Activated B cell treated with CpG ODN at 0.5 μM for 24 hours (primary cell): ENCODE measurements at regions of chr11 and their contacts with region 1.

Region 1: DNA sequence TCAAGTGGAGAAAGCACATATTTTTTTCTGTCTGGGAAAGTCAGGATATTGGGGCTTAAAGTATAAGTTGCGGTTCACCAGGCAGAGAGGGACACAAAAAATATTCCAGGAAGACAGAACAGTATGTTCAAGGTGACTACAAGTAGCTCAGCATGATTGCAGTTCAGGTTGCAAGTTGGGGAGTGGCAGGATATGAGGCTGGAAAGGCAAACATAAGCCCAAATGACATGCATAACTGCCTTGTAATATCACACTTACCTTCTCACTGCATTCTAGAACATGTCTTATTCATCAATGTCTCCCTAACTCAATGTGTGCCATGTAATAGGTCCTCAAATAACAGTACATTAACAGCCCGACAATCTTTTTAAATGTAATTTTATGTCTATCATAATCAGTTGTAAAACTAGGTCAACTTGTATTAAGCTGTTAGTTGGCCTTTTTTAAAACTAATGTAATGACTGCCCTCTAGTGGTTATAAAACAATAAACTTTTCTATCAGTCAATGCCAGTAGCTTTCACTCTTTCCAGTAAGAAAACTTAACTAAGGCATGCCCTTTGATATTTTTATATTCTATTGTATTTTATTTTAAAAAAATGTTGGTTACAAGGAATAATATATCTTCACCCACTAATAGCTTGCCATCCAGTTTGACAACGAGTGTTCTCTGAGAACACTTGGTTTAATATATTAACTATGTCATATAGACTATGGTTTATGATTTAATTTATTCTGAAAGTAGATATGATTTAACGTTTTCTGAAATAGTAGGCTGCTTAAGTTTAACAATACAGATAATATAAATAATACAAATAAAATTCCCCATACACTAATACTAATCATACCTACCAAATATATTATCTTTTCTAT is 39.4 kb upstream of the CFAP300 start:
- DNase-seq: no peak
- ATAC-seq: no peak
- H3K4me3 Mint-ChIP-seq: no peak overlapping the region
- H3K27ac Mint-ChIP-seq: no peak overlapping the region
- H3K4me1 Mint-ChIP-seq: no peaks in the 10 kb centered on the region
- H3K27me3 Mint-ChIP-seq: peaks cover 11% of the 10 kb centered on the region
- CTCF ChIP-seq: peak; percentile 81

Region 2: GRCh38 chr11:101390539-101390938 is 617.3 kb before region 1 on chr11:
- CTCF ChIA-PET with region 1: no interaction called
- POLR2A ChIA-PET with region 1: no interaction called
- intact Hi-C with region 1: loop called (anchors 2 kb)
- DNase-seq: no peak
- ATAC-seq: no peak
- H3K4me3 Mint-ChIP-seq: no peak overlapping the region
- H3K27ac Mint-ChIP-seq: no peak overlapping the region
- H3K4me1 Mint-ChIP-seq: no peaks in the 10 kb centered on the region
- H3K27me3 Mint-ChIP-seq: no peaks in the 10 kb centered on the region
- CTCF ChIP-seq: no peak

Region 3: DNA sequence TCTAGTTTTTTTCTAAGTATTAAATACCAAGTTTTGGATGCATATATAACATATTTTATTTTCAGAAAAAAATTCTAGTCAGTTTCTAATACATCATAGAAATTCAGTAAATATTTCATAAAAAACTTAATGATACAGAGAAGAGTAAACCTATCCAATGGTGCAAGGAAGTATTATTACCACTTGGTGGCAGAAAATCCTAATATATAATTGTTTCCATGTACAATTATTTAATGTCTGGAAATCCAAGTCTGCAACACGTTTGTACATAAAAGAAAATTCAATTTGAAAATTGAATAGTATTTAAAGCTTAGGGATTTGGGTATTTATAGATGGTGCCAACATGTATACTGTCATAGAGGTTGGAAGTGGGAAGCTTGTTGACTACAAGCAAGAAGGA is 551.0 kb before region 1 on chr11:
- CTCF ChIA-PET with region 1: interaction called, 10 read pairs
- POLR2A ChIA-PET with region 1: no interaction called
- intact Hi-C with region 1: loop called (anchors 2 kb)
- DNase-seq: no peak
- ATAC-seq: no peak
- H3K4me3 Mint-ChIP-seq: no peak overlapping the region
- H3K27ac Mint-ChIP-seq: no peak overlapping the region
- H3K4me1 Mint-ChIP-seq: no peaks in the 10 kb centered on the region
- H3K27me3 Mint-ChIP-seq: no peaks in the 10 kb centered on the region
- CTCF ChIP-seq: no peak

Region 4: GRCh38 chr11:101860696-101861427 is 146.9 kb before region 1 on chr11:
- CTCF ChIA-PET with region 1: interaction called, 238 read pairs
- POLR2A ChIA-PET with region 1: no interaction called
- intact Hi-C with region 1: loop called (anchors 1 kb)
- DNase-seq: no peak
- ATAC-seq: peak; percentile 52
- H3K4me3 Mint-ChIP-seq: no peak overlapping the region
- H3K27ac Mint-ChIP-seq: no peak overlapping the region
- H3K4me1 Mint-ChIP-seq: no peaks in the 10 kb centered on the region
- H3K27me3 Mint-ChIP-seq: peaks cover 12% of the 10 kb centered on the region
- CTCF ChIP-seq: no peak

Region 5: DNA sequence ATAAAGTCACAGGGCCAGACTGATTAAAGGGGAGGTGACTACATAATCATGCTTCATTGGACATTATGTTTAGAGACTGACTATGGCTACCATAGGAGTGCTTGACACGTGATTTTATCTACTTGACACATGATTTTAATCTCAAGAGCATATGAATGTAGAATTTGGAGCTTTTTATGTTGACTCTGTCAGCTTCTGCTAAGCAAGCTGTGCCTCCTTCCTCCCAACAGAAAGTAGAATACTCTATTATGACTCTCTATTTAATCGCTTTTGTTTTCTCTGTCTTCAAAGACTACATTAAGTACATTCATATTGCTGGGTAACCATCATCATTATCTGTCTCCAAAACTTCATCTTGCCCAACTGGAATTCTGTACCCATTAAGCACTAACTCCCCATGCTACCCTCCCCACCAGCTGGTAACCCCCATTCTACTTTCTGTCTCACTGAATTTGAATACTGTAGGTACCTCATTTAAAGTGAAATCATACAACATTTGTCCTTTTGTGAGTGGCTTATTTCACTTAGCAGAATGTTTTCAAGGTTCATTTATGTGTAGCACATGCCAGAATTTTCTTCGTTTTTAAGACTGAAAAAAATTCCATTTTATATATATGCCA is 66.8 kb before region 1 on chr11:
- CTCF ChIA-PET with region 1: no interaction called
- POLR2A ChIA-PET with region 1: no interaction called
- intact Hi-C with region 1: no loop called
- DNase-seq: no peak
- ATAC-seq: no peak
- H3K4me3 Mint-ChIP-seq: no peak overlapping the region
- H3K27ac Mint-ChIP-seq: no peak overlapping the region
- H3K4me1 Mint-ChIP-seq: no peaks in the 10 kb centered on the region
- H3K27me3 Mint-ChIP-seq: no peaks in the 10 kb centered on the region
- CTCF ChIP-seq: no peak

Region 6: DNA sequence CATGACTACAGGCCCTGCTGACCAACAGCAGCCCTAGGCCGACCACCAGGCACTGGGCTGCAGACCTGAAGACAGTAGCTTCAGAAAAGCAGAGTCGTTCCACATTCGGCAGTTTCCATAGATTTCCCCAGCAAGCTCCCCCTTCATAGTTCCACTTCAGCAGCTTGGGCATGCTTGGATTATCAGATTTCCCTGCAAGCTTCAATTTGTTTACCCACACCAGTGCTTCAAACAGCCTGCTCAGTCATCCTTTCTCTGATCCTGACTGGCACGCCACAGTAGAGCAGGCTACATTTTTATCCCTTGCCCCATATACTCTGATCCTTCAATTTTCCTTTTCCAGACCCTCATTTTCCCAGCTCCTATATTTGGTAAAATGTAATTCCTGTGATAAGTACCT is 11.7 kb before region 1 on chr11:
- CTCF ChIA-PET with region 1: interaction called, 17 read pairs
- POLR2A ChIA-PET with region 1: no interaction called
- intact Hi-C with region 1: no loop called
- DNase-seq: no peak
- ATAC-seq: no peak
- H3K4me3 Mint-ChIP-seq: no peak overlapping the region
- H3K27ac Mint-ChIP-seq: no peak overlapping the region
- H3K4me1 Mint-ChIP-seq: no peaks in the 10 kb centered on the region
- H3K27me3 Mint-ChIP-seq: no peaks in the 10 kb centered on the region
- CTCF ChIP-seq: no peak